ENCODE measurements at regions of chr3 and their contacts with region 1.

Region 1: DNA sequence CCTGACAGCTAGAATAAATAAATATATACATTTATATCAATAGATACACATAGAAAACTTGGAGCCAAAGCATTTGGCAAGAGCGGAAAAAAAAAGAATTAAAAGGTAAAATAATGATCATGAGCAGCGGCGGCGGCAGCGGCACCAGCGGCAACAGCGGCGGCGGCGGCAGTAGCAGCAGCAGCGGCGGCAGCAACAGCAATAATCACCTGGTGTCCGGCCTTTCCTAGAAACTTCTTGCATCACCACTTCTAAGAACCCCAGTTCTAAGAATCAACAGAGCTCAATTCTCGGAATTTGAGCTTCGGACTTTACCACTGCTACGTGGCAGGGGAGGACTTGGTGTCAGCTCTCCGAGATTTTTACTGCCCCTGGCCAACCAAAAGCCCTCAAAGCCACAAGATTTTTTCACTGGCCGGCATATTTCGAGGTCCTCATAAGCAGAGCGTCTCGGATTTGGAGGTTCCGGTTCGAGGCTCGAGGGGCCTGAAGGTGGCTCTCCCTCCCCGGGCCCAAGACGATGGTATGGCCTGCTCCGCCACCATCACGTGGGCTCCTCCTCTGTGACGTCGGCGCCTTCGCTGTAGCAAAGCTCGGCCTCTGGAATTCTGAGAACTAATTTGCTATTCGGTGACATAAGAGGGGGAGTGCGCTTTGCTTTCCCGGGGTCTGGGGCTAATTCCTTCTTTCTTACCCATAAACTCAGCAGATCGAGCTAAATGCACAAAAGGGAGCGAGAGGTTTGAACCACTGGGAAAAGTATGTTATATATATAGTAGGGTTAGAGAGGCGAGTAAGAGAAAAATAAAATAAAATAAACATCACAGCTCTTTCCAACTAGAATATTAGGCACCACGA is at the start of gene BCL6:
- DNase-seq: peak; percentile 89 to 94
- ATAC-seq: peak; percentile 70 to 82 (median 80)
- H3K4me3 ChIP-seq: peak within 1 kb of the TSS; percentile 60 to 95 (median 74)
- H3K27ac ChIP-seq: peak within 1 kb of the TSS; percentile 85 to 100 (median 99)
- H3K4me1 ChIP-seq: peaks cover 3 to 51% (median 19%) of the 10 kb centered on the region in 9 donors
- H3K27me3 ChIP-seq: no peaks in the 10 kb centered on the region
- CTCF ChIP-seq: peak in 2 of 9 donors; percentile 6 to 22
- total RNA-seq, gene BCL6: 27.9 to 154 (median 51.7) TPM

Region 2: DNA sequence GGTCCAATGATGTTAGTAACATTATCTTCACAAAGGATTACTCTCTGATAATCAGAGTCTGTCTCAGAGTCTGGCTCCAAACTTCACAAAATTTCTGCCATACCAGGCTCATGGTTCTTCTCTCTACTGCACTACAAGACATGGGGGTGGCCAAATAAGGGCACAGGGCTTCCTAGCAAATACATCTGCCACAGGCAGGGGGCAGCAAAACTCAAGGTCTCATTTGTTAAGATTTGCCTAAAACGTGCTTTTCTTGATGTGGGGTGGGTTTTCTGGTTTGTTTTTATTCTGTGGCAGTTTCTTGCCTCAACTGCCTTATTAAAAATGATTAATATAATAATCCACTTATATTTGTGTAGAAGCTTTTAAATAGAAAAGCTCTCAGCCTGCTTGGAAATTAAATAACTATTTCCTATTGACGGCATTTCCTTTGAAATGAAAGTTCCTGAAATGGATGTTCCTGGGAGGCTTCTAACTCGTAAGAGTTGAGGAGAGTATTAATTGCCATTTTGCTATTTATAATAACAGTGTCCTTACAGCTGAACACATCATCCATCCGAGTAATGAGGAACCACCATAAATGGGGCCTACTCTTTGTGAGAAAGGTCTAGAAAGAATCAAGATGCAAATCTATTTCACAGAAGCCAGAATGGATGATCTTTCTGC is 129.0 kb before region 1 on chr3:
- intact Hi-C with region 1: no loop called
- DNase-seq: peak in 1 of 2 donors; percentile 34
- ATAC-seq: peak in 1 of 8 donors; percentile 23
- H3K4me3 ChIP-seq: no peak overlapping the region
- H3K27ac ChIP-seq: no peak overlapping the region
- H3K4me1 ChIP-seq: peaks cover 0 to 3% (median 0%) of the 10 kb centered on the region in 9 donors
- H3K27me3 ChIP-seq: peaks cover 0 to 6% (median 0%) of the 10 kb centered on the region in 7 donors
- CTCF ChIP-seq: peak; percentile 26 to 75 (median 68)

Region 3: DNA sequence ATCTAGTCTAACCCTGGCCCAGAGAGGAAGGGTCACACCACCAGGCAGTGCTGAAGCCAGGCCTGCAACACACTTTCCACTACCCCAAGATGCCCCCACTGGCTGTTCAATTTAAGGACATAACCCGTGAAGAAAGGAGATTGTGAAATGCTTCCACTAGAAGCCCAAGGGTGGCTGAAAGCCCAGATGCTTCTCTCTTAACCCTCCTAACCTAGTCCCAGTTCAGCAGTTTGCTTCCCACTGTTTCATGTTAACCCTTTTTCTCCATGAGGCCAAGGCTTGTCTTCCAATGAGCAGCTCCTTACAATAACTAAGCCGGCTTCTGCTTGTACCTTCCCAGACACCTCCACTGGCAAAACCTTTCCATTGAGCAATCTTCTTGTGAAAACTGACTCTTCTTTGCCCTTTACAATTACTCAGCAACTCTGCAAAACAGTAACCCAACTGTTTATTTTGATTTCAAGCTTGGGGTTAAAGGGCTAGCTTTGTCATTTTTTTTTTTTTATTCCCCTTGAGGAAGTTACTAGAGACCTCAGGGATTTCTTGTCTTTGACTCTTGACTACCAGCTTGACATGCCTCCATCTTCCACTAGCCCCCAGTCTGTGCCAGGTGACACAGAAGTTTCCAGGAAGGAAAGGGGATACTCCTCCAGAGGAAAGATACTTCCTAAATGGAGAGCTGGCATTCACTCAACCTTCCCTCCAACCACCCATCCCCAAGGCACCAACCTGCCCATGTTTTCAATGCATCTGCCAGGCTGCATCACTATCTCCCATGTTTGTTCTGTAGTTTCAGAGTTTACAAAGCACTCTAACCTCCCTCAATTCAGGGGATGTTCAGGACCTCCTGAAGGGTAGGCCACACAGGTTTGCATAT is 209.9 kb after region 1 on chr3:
- intact Hi-C with region 1: loop called in 4 of 10 experiments (anchors 5 to 10 kb)
- DNase-seq: no peak
- ATAC-seq: peak; percentile 17 to 77 (median 32)
- H3K4me3 ChIP-seq: no peak overlapping the region
- H3K27ac ChIP-seq: peak overlapping the region in 7 of 10 donors; percentile 28 to 81 (median 42)
- H3K4me1 ChIP-seq: peaks cover 0 to 81% (median 35%) of the 10 kb centered on the region in 9 donors
- H3K27me3 ChIP-seq: no peaks in the 10 kb centered on the region
- CTCF ChIP-seq: no peak

Region 4: DNA sequence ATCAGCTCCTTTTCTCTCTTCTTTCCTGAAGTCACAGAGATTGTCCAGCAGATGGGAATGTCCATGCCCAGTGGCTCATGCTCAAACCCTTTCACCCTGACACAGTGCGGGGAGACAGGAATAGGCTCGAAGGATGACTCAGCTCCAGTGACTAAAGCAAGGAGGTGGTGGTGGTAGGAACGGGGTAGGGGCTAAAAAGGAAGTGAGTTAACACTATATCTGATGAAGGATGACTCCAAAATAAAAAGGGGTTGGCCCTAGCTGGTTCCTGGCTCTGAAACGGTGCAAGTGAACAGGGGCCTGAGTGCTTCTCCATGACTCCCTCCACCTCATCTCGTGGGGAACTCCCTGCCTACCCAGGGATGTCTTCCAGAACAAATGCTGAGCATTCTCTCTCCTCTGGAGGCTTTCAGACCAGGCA is 241.1 kb after region 1 on chr3:
- intact Hi-C with region 1: loop called in 2 of 10 experiments (anchors 5 to 10 kb)
- DNase-seq: no peak
- ATAC-seq: peak in 4 of 8 donors; percentile 23 to 35 (median 30)
- H3K4me3 ChIP-seq: no peak overlapping the region
- H3K27ac ChIP-seq: peak overlapping the region in 5 of 10 donors; percentile 28 to 73 (median 50)
- H3K4me1 ChIP-seq: peaks cover 0 to 33% (median 14%) of the 10 kb centered on the region in 9 donors
- H3K27me3 ChIP-seq: peaks cover 0 to 5% (median 0%) of the 10 kb centered on the region in 7 donors
- CTCF ChIP-seq: no peak

Region 5: GRCh38 chr3:188154014-188154808 is 408.8 kb after region 1 on chr3 and contains the start of gene LPP:
- intact Hi-C with region 1: loop called in 9 of 10 experiments (anchors 1 to 10 kb)
- DNase-seq: peak; percentile 76 to 82
- ATAC-seq: peak; percentile 72 to 93 (median 82)
- H3K4me3 ChIP-seq: peak within 1 kb of the TSS; percentile 66 to 92 (median 80)
- H3K27ac ChIP-seq: peak within 1 kb of the TSS; percentile 90 to 99 (median 96)
- H3K4me1 ChIP-seq: peaks cover 0 to 67% (median 54%) of the 10 kb centered on the region in 9 donors
- H3K27me3 ChIP-seq: no peaks in the 10 kb centered on the region
- CTCF ChIP-seq: peak in 2 of 9 donors; percentile 23 to 26
- total RNA-seq, gene LPP: 116 to 188 (median 148) TPM

Region 6: GRCh38 chr3:188294823-188295487 is 549.5 kb after region 1 on chr3:
- intact Hi-C with region 1: loop called in 1 of 10 experiments (anchors 10 kb)
- DNase-seq: peak in 1 of 2 donors; percentile 29
- ATAC-seq: peak; percentile 73 to 90 (median 88)
- H3K4me3 ChIP-seq: no peak overlapping the region
- H3K27ac ChIP-seq: peak overlapping the region; percentile 34 to 87 (median 79)
- H3K4me1 ChIP-seq: peaks cover 3 to 85% (median 70%) of the 10 kb centered on the region in 9 donors
- H3K27me3 ChIP-seq: no peaks in the 10 kb centered on the region
- CTCF ChIP-seq: no peak

Region 7: GRCh38 chr3:188578576-188579363 is 833.3 kb after region 1 on chr3:
- intact Hi-C with region 1: loop called in 1 of 10 experiments (anchors 10 kb)
- DNase-seq: peak; percentile 34 to 86
- ATAC-seq: peak; percentile 92 to 97 (median 95)
- H3K4me3 ChIP-seq: no peak overlapping the region
- H3K27ac ChIP-seq: peak overlapping the region in 9 of 10 donors; percentile 14 to 82 (median 77)
- H3K4me1 ChIP-seq: peaks cover 3 to 69% (median 33%) of the 10 kb centered on the region in 9 donors
- H3K27me3 ChIP-seq: no peaks in the 10 kb centered on the region
- CTCF ChIP-seq: no peak

Region 8: DNA sequence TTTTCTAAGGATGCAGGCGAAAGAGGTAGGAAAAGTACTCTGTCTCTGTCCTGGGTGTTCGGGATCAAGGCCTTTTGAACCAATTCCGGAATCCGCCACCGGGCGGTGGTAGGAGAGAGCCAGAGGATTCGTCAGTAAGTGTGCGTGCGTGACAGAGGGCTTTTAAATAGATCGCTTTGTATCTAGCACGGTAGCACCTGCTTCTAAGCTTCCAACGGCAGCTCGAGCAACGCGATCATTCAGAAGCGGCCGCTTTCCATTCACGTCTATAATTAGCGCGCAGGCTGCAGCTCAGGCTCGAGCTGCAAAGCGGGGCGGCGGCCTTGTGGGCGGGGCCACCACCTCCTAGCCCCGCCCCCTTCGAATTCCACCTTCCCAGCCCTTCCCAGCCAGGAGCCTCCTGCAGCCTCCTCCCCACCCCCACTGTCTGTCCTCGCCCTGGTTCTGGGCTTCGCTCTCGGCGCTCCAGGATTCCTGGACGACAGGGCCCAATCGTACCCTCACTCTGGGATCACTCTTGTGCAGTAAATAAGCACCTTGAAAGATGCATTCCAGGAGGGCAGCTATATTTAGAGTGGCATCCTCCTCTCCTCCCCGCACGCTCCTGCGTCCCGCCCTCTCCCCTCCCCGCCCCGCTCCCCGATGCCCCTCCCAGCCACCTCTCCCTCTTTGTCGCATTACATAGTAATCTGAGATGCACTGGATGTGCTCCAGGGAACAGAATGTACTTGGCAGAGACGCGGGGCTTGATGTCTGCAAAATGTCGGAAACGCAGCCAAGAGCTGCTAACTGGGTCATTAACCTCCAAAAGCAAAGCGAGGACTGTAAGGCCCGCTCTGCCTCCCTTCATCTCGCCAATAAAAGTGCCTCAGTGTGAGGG is 1202.2 kb after region 1 on chr3:
- intact Hi-C with region 1: loop called in 2 of 10 experiments (anchors 1 to 2 kb)
- DNase-seq: peak; percentile 91 to 97
- ATAC-seq: peak; percentile 88 to 95 (median 93)
- H3K4me3 ChIP-seq: peak overlapping the region in 9 of 10 donors; percentile 27 to 56 (median 52)
- H3K27ac ChIP-seq: peak overlapping the region; percentile 88 to 99 (median 97)
- H3K4me1 ChIP-seq: peaks cover 22 to 95% (median 45%) of the 10 kb centered on the region in 9 donors
- H3K27me3 ChIP-seq: no peaks in the 10 kb centered on the region
- CTCF ChIP-seq: peak in 8 of 9 donors; percentile 22 to 57 (median 36)